Activated CD4-positive, alpha-beta T cell treated with anti-CD3 and anti-CD28 coated beads for 36 hours (primary cell): ENCODE measurements at regions of chr9 and their contacts with region 1.

Region 1: GRCh38 chr9:68584189-68585033 is 43.7 kb upstream of the TMEM252 start:
- DNase-seq: peak; percentile 92
- ATAC-seq: peak; percentile 99
- H3K4me3 Mint-ChIP-seq: no peak overlapping the region
- H3K27ac Mint-ChIP-seq: no peak overlapping the region
- H3K4me1 Mint-ChIP-seq: peaks cover 3% of the 10 kb centered on the region
- H3K27me3 Mint-ChIP-seq: peaks cover 6% of the 10 kb centered on the region

Region 2: GRCh38 chr9:68685770-68686169 is 101.4 kb after region 1 on chr9:
- CTCF ChIA-PET with region 1: interaction called, 7 read pairs
- POLR2A ChIA-PET with region 1: no interaction called
- intact Hi-C with region 1: loop called (anchors 1 to 2 kb)
- DNase-seq: peak; percentile 63
- ATAC-seq: peak; percentile 83
- H3K4me3 Mint-ChIP-seq: no peak overlapping the region
- H3K27ac Mint-ChIP-seq: no peak overlapping the region
- H3K4me1 Mint-ChIP-seq: peaks cover 10% of the 10 kb centered on the region
- H3K27me3 Mint-ChIP-seq: peaks cover 21% of the 10 kb centered on the region

Region 3: DNA sequence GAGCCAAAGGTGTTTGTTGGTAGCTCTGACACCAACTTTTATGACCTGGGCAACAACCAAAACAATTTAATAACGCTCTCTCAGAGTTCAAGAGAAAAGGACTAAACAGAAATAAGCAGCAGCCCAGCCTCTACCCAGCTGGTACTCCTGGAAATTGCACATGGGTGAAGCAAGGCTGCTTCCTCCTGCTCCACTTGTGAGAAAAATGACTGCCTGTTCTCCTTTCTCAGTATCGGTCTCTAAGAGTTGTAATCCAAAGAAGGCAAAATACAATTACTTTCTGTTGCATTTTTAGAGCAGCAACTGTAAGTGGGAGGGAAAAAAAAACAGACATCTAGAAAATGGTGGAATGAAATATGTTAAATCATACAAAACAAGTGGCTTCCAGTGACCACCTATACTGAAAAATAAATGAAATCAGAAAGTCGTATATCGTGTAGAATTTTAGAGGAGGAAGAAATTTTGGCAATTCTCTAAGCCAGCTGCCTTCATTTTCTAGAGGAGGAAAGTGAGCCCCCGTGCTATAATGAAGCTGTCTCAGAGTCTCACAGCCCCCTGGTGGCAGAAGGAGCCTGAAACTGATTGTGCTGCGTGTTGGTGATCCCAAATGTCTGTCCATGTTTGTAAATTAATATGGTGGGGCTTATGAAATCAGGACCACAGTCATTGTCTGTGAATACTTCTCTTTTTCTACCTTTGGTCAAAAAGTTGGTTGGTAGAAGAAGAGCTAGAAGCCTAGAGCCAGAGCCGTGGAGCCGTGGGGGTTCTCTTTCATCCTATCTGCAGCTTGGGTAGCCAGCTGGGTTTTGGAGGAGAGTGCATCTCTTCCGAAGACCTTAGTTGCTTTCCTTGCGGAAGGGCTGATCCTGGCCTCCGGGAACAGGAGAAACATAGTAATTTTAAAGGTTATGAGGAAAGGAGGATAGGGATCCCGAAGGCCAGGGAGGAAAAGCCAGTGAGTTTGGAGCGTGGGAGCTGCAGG is 260.5 kb after region 1 on chr9:
- CTCF ChIA-PET with region 1: no interaction called
- POLR2A ChIA-PET with region 1: no interaction called
- intact Hi-C with region 1: loop called in 1 of 2 experiments (anchors 10 kb)
- DNase-seq: peak; percentile 52
- ATAC-seq: no peak
- H3K4me3 Mint-ChIP-seq: no peak overlapping the region
- H3K27ac Mint-ChIP-seq: no peak overlapping the region
- H3K4me1 Mint-ChIP-seq: peaks cover 4% of the 10 kb centered on the region
- H3K27me3 Mint-ChIP-seq: no peaks in the 10 kb centered on the region

Region 4: GRCh38 chr9:68999393-69000105 is 415.1 kb after region 1 on chr9:
- CTCF ChIA-PET with region 1: interaction called, 16 read pairs
- POLR2A ChIA-PET with region 1: no interaction called
- intact Hi-C with region 1: loop called (anchors 1 kb)
- DNase-seq: peak; percentile 75
- ATAC-seq: peak; percentile 90
- H3K4me3 Mint-ChIP-seq: no peak overlapping the region
- H3K27ac Mint-ChIP-seq: peak overlapping the region; percentile 63
- H3K4me1 Mint-ChIP-seq: peaks cover 24% of the 10 kb centered on the region
- H3K27me3 Mint-ChIP-seq: peaks cover 2% of the 10 kb centered on the region

Region 5: GRCh38 chr9:69199769-69200470 is 615.5 kb after region 1 on chr9:
- CTCF ChIA-PET with region 1: no interaction called
- POLR2A ChIA-PET with region 1: no interaction called
- intact Hi-C with region 1: loop called in 1 of 2 experiments (anchors 10 kb)
- DNase-seq: no peak
- ATAC-seq: no peak
- H3K4me3 Mint-ChIP-seq: no peak overlapping the region
- H3K27ac Mint-ChIP-seq: no peak overlapping the region
- H3K4me1 Mint-ChIP-seq: peaks cover 10% of the 10 kb centered on the region
- H3K27me3 Mint-ChIP-seq: no peaks in the 10 kb centered on the region